Activated CD4-positive, alpha-beta memory T cell treated with anti-CD3 and anti-CD28 coated beads, Interleukin-2, amount 10 ng/mL, durations not matched to agents 7 days and 5 days (primary cell): ENCODE measurements at regions of chr7 and their contacts with region 1.

Region 1: GRCh38 chr7:127651556-127652332 is at the start of gene SND1:
- DNase-seq: peak; percentile 99
- H3K4me3 Mint-ChIP-seq: peak within 1 kb of the TSS; percentile 98
- H3K27ac Mint-ChIP-seq: peak within 1 kb of the TSS; percentile 95
- H3K4me1 Mint-ChIP-seq: peaks cover 37% of the 10 kb centered on the region
- H3K27me3 Mint-ChIP-seq: no peaks in the 10 kb centered on the region
- total RNA-seq, gene SND1: 171 to 175 TPM

Region 2: GRCh38 chr7:127566242-127566641 is 85.5 kb before region 1 on chr7:
- CTCF ChIA-PET with region 1: no interaction called
- POLR2A ChIA-PET with region 1: no interaction called
- DNase-seq: no peak
- H3K4me3 Mint-ChIP-seq: no peak overlapping the region
- H3K27ac Mint-ChIP-seq: no peak overlapping the region
- H3K4me1 Mint-ChIP-seq: no peaks in the 10 kb centered on the region
- H3K27me3 Mint-ChIP-seq: no peaks in the 10 kb centered on the region

Region 3: GRCh38 chr7:127585044-127585953 is 66.4 kb before region 1 on chr7 and contains the start of gene GCC1:
- CTCF ChIA-PET with region 1: interaction called, 5 read pairs
- POLR2A ChIA-PET with region 1: interaction called, 18 read pairs
- DNase-seq: peak; percentile 95
- H3K4me3 Mint-ChIP-seq: peak within 1 kb of the TSS; percentile 92
- H3K27ac Mint-ChIP-seq: peak within 1 kb of the TSS; percentile 82
- H3K4me1 Mint-ChIP-seq: peaks cover 63% of the 10 kb centered on the region
- H3K27me3 Mint-ChIP-seq: no peaks in the 10 kb centered on the region
- total RNA-seq, gene GCC1: 22.0 to 22.4 TPM

Region 4: GRCh38 chr7:127671341-127671740 is 19.6 kb after region 1 on chr7:
- CTCF ChIA-PET with region 1: no interaction called
- POLR2A ChIA-PET with region 1: no interaction called
- DNase-seq: no peak
- H3K4me3 Mint-ChIP-seq: no peak overlapping the region
- H3K27ac Mint-ChIP-seq: no peak overlapping the region
- H3K4me1 Mint-ChIP-seq: peaks cover 24% of the 10 kb centered on the region
- H3K27me3 Mint-ChIP-seq: no peaks in the 10 kb centered on the region